OCI-LY7 (cell line): ENCODE measurements at regions of chr11 and their contacts with region 1.

Region 1: GRCh38 chr11:124070915-124071635 is 29.9 kb upstream of the OR10G7 start:
- DNase-seq: peak; percentile 69
- H3K4me3 ChIP-seq: peak overlapping the region; percentile 28
- H3K27ac ChIP-seq: peak overlapping the region; percentile 6
- H3K4me1 ChIP-seq: peaks cover 21% of the 10 kb centered on the region
- CTCF ChIP-seq: peak; percentile 95

Region 2: GRCh38 chr11:123741159-123742028 is 329.7 kb before region 1 on chr11 and contains the start of gene ZNF202:
- CTCF ChIA-PET with region 1: no interaction called
- POLR2A ChIA-PET with region 1: no interaction called
- intact Hi-C with region 1: loop called (anchors 2 kb)
- DNase-seq: peak; percentile 94
- H3K4me3 ChIP-seq: peak within 1 kb of the TSS; percentile 96
- H3K27ac ChIP-seq: peak within 1 kb of the TSS; percentile 38
- H3K4me1 ChIP-seq: peaks cover 24% of the 10 kb centered on the region
- CTCF ChIP-seq: no peak
- total RNA-seq, gene ZNF202: 15.9 and 19.6 TPM in 2 replicates

Region 3: GRCh38 chr11:123945132-123945531 is 125.9 kb before region 1 on chr11:
- CTCF ChIA-PET with region 1: no interaction called
- POLR2A ChIA-PET with region 1: no interaction called
- intact Hi-C with region 1: no loop called
- DNase-seq: no peak
- H3K4me3 ChIP-seq: no peak overlapping the region
- H3K27ac ChIP-seq: no peak overlapping the region
- H3K4me1 ChIP-seq: no peaks in the 10 kb centered on the region
- CTCF ChIP-seq: no peak

Region 4: DNA sequence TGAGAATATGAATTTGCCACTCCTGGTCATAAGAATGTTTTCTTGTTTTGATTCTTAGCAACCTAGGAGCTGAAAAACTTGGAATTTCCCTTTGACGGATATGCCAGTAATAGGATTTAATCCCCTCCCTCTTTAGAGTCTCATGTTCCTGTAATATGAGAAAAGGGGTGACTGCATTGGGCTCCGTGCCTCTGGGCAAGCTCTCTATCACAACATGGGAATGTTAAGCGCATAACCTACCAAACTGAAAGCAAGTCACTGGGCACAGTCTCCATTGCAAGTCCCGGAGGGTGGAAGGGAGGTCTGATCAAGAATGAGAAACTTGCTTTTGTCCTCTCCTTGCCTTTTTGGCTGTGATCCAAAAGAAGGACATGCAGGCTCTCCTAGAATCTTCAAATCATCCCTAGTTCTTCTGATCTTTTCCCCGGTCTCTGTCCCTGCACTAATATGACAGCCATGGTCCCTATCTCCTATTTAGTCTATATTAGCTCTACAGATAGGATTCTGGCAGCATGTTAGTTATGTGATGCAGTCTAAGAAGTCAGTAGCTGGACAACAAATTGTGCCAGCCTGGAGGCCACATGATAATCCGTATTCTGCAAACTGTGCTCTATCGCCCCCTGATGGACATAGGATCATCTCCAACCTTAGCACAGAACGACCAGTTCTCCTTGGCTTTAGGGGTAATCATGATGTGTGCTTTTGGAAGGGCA is 123.8 kb after region 1 on chr11:
- CTCF ChIA-PET with region 1: interaction called, 4 read pairs
- POLR2A ChIA-PET with region 1: interaction called, 3 read pairs
- intact Hi-C with region 1: loop called (anchors 1 kb)
- DNase-seq: peak; percentile 56
- H3K4me3 ChIP-seq: no peak overlapping the region
- H3K27ac ChIP-seq: no peak overlapping the region
- H3K4me1 ChIP-seq: no peaks in the 10 kb centered on the region
- CTCF ChIP-seq: peak; percentile 91

Region 5: GRCh38 chr11:124402326-124402922 is 331.3 kb after region 1 on chr11:
- CTCF ChIA-PET with region 1: no interaction called
- POLR2A ChIA-PET with region 1: no interaction called
- intact Hi-C with region 1: loop called (anchors 5 kb)
- DNase-seq: peak; percentile 65
- H3K4me3 ChIP-seq: no peak overlapping the region
- H3K27ac ChIP-seq: no peak overlapping the region
- H3K4me1 ChIP-seq: no peaks in the 10 kb centered on the region
- CTCF ChIP-seq: peak; percentile 90

Region 6: GRCh38 chr11:124586238-124586860 is 515.3 kb after region 1 on chr11:
- CTCF ChIA-PET with region 1: interaction called, 5 read pairs
- POLR2A ChIA-PET with region 1: no interaction called
- intact Hi-C with region 1: loop called (anchors 5 kb)
- DNase-seq: peak; percentile 56
- H3K4me3 ChIP-seq: no peak overlapping the region
- H3K27ac ChIP-seq: no peak overlapping the region
- H3K4me1 ChIP-seq: no peaks in the 10 kb centered on the region
- CTCF ChIP-seq: peak; percentile 82